ENCODE measurements at regions of chr20 and their contacts with region 1.

Region 1: DNA sequence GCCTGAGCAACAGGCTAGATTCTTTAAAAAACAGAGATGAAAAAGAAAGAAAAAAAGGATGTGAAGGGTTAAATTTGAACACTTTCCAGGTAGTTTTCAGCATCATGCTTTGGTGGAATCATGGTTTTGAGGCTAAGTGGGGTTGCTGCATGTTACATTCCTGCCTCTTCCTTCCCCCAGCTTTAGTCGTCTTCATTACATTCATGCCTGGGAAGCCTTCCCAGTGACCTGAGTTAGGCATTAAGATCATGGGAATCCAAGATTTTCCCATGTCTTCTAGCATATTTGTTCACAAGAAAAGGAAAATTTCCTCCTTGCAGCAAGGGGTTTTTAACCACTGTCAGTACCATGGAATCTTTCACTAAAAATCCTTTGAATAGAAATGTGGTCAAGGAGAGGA is 12.0 kb downstream of the TPX2 start:
- DNase-seq: no peak
- H3K4me3 ChIP-seq: no peak overlapping the region
- H3K27ac ChIP-seq: no peak overlapping the region
- H3K4me1 ChIP-seq: no peaks in the 10 kb centered on the region
- H3K27me3 ChIP-seq: no peaks in the 10 kb centered on the region
- CTCF ChIP-seq: no peak

Region 2: GRCh38 chr20:31485450-31486339 is 265.4 kb before region 1 on chr20:
- CTCF ChIA-PET with region 1: no interaction called
- POLR2A ChIA-PET with region 1: no interaction called
- intact Hi-C with region 1: no loop called
- DNase-seq: no peak
- H3K4me3 ChIP-seq: no peak overlapping the region
- H3K27ac ChIP-seq: no peak overlapping the region
- H3K4me1 ChIP-seq: no peaks in the 10 kb centered on the region
- H3K27me3 ChIP-seq: no peaks in the 10 kb centered on the region
- CTCF ChIP-seq: no peak

Region 3: GRCh38 chr20:31770243-31770642 is 19.1 kb after region 1 on chr20:
- CTCF ChIA-PET with region 1: interaction called, 6 read pairs
- POLR2A ChIA-PET with region 1: interaction called, 29 read pairs
- intact Hi-C with region 1: no loop called
- DNase-seq: no peak
- H3K4me3 ChIP-seq: no peak overlapping the region
- H3K27ac ChIP-seq: no peak overlapping the region
- H3K4me1 ChIP-seq: no peaks in the 10 kb centered on the region
- H3K27me3 ChIP-seq: no peaks in the 10 kb centered on the region
- CTCF ChIP-seq: no peak

Region 4: GRCh38 chr20:31788578-31788977 is 37.5 kb after region 1 on chr20:
- CTCF ChIA-PET with region 1: no interaction called
- POLR2A ChIA-PET with region 1: no interaction called
- intact Hi-C with region 1: loop called (anchors 5 kb)
- DNase-seq: no peak
- H3K4me3 ChIP-seq: no peak overlapping the region
- H3K27ac ChIP-seq: no peak overlapping the region
- H3K4me1 ChIP-seq: no peaks in the 10 kb centered on the region
- H3K27me3 ChIP-seq: no peaks in the 10 kb centered on the region
- CTCF ChIP-seq: no peak; the same call in 1 of the 2 replicates

Region 5: GRCh38 chr20:31879143-31879987 is 128.2 kb after region 1 on chr20:
- CTCF ChIA-PET with region 1: no interaction called
- POLR2A ChIA-PET with region 1: no interaction called
- intact Hi-C with region 1: no loop called
- DNase-seq: peak; percentile 75 to 95
- H3K4me3 ChIP-seq: peak overlapping the region; percentile 60
- H3K27ac ChIP-seq: no peak overlapping the region
- H3K4me1 ChIP-seq: peaks cover 10% of the 10 kb centered on the region; the same call in 1 of the 2 replicates
- H3K27me3 ChIP-seq: peaks cover 15% of the 10 kb centered on the region
- CTCF ChIP-seq: no peak; the same call in 1 of the 2 replicates

Measured in PC-9 (cell line).